ENCODE measurements at regions of chr13 and their contacts with region 1.

Region 1: GRCh38 chr13:113951246-113951999 is 22.5 kb downstream of the C13orf46 start:
- DNase-seq: peak; percentile 56
- H3K4me3 ChIP-seq: no peak overlapping the region
- H3K27ac ChIP-seq: no peak overlapping the region
- H3K4me1 ChIP-seq: no peaks in the 10 kb centered on the region
- H3K27me3 ChIP-seq: no peaks in the 10 kb centered on the region
- CTCF ChIP-seq: peak; percentile 79 to 90
- POLR2A ChIP-seq: no peak

Region 2: GRCh38 chr13:114110091-114110829 is 158.8 kb after region 1 on chr13:
- CTCF ChIA-PET with region 1: no interaction called
- POLR2A ChIA-PET with region 1: no interaction called
- dilution Hi-C with region 1: no loop called
- intact Hi-C with region 1: loop called (anchors 1 kb)
- DNase-seq: peak; percentile 81
- H3K4me3 ChIP-seq: no peak overlapping the region
- H3K27ac ChIP-seq: peak overlapping the region; percentile 44
- H3K4me1 ChIP-seq: peaks cover 37% of the 10 kb centered on the region
- H3K27me3 ChIP-seq: no peaks in the 10 kb centered on the region
- CTCF ChIP-seq: peak; percentile 38 to 58
- POLR2A ChIP-seq: no peak

Region 3: GRCh38 chr13:114234645-114235421 is 283.4 kb after region 1 on chr13 and contains the start of gene CDC16:
- CTCF ChIA-PET with region 1: interaction called, 4 read pairs
- POLR2A ChIA-PET with region 1: no interaction called
- dilution Hi-C with region 1: no loop called
- intact Hi-C with region 1: loop called (anchors 2 kb)
- DNase-seq: peak; percentile 76
- H3K4me3 ChIP-seq: peak within 1 kb of the TSS; percentile 57 to 96 (median 85)
- H3K27ac ChIP-seq: peak within 1 kb of the TSS; percentile 3
- H3K4me1 ChIP-seq: peaks cover 6% of the 10 kb centered on the region
- H3K27me3 ChIP-seq: peaks cover 14 to 21% of the 10 kb centered on the region in 2 experiments
- CTCF ChIP-seq: peak in 1 of 2 donors; percentile 29
- POLR2A ChIP-seq: no peak
- total RNA-seq, gene CDC16: 77.1 and 83.3 TPM in 2 replicates